Breast epithelium (tissue), 4 donors: ENCODE measurements at regions of chr6 and their contacts with region 1.

Region 1: DNA sequence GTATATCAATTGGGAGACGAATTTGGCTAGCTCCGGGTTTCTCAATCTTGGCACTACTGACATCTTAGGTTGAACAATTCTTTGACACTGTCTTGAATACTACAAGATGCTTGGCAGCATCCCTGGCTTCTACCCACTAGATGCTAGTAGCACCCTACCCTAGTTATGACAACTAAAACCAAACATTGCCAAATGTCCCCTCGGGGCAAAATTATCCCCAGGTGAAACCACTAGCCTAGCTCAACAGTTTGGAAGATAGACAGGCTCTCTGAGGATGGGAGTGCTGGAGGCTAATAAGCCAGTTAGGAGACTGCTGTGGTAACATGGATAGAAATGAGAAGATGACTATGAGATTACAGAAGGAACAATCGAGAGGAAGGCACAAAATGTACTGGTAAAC is 20.9 kb downstream of the CCNC start:
- DNase-seq: no peak
- H3K4me3 ChIP-seq: no peak overlapping the region
- H3K27ac ChIP-seq: no peak overlapping the region
- H3K4me1 ChIP-seq: no peaks in the 10 kb centered on the region
- H3K27me3 ChIP-seq: no peaks in the 10 kb centered on the region
- CTCF ChIP-seq: no peak
- POLR2A ChIP-seq: no peak

Region 2: DNA sequence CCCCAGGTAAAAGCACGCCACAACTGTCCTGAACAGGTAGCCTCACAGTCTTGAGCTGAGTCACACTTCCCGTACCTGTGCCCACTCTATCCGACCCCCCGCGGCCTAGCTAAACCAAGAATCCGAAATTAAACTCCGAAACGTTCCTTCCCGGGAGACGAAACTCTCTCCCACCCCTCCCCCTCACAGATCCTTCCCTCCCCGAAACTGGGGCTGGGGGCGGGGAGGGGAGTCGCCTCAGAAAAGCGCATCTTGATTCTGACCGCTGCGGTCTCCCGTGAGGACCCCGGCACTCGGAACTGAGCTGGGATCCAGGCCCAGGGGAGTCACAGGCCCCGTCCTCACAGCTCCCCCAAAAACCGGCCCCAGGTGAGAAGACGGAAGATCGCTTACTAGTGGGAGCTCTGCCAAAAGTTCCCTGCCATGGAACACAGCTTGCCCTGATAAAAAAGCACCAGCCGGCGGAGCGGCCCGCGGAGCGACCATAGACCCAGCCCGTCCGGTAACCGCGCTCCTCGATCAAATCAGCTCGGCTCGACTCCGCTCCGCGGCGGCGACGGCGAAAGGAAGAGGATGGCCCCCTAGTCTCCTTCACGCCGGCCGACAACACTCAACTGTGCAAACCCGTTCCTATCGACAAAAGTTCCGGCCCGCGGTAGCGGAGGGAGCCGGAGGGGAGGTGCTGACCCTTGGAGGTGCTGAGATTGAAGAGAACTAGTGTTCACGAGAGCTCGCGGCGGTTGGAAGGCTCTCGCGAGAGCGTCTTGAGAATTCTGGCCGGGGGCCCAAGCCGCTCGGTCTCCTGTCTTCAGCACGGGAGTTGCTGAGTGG is 20.8 kb after region 1 on chr6 and contains the start of gene CCNC:
- intact Hi-C with region 1: loop called (anchors 1 kb)
- DNase-seq: peak; percentile 92
- H3K4me3 ChIP-seq: peak within 1 kb of the TSS; percentile 82 to 96 (median 93)
- H3K27ac ChIP-seq: peak within 1 kb of the TSS; percentile 91 to 92
- H3K4me1 ChIP-seq: peaks cover 0 to 16% of the 10 kb centered on the region in 2 donors
- H3K27me3 ChIP-seq: no peaks in the 10 kb centered on the region
- CTCF ChIP-seq: no peak
- POLR2A ChIP-seq: peak; percentile 56
- total RNA-seq, gene CCNC: 59.3 to 79.8 (median 63.0) TPM

Region 3: GRCh38 chr6:99802396-99803031 is 255.0 kb after region 1 on chr6:
- intact Hi-C with region 1: no loop called
- DNase-seq: no peak
- H3K4me3 ChIP-seq: no peak overlapping the region
- H3K27ac ChIP-seq: no peak overlapping the region
- H3K4me1 ChIP-seq: no peaks in the 10 kb centered on the region
- H3K27me3 ChIP-seq: no peaks in the 10 kb centered on the region
- CTCF ChIP-seq: no peak
- POLR2A ChIP-seq: no peak

Region 4: DNA sequence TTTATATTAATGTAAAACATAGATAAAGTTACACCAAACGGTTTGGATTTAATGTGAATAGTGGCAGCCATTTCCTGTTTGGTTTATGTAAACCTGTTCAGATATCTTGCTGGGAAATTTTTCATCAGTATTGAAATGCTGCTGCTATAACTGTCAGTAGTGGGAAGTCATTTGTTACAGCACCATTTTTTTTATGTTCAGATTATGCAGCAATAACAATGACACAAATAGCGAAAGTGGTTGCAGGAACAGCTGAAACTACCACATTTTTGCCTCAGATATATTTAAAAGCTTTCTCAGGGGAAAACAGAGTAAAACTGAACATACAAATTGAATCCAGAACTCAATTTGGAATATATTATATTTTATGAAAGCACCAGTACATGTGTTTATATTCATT is 1046.0 kb after region 1 on chr6:
- intact Hi-C with region 1: no loop called
- DNase-seq: no peak
- H3K4me3 ChIP-seq: no peak overlapping the region
- H3K27ac ChIP-seq: no peak overlapping the region
- H3K4me1 ChIP-seq: no peaks in the 10 kb centered on the region
- H3K27me3 ChIP-seq: no peaks in the 10 kb centered on the region
- CTCF ChIP-seq: no peak
- POLR2A ChIP-seq: no peak